IMR-90 (cell line): ENCODE measurements at regions of chr12 and their contacts with region 1.

Region 1: DNA sequence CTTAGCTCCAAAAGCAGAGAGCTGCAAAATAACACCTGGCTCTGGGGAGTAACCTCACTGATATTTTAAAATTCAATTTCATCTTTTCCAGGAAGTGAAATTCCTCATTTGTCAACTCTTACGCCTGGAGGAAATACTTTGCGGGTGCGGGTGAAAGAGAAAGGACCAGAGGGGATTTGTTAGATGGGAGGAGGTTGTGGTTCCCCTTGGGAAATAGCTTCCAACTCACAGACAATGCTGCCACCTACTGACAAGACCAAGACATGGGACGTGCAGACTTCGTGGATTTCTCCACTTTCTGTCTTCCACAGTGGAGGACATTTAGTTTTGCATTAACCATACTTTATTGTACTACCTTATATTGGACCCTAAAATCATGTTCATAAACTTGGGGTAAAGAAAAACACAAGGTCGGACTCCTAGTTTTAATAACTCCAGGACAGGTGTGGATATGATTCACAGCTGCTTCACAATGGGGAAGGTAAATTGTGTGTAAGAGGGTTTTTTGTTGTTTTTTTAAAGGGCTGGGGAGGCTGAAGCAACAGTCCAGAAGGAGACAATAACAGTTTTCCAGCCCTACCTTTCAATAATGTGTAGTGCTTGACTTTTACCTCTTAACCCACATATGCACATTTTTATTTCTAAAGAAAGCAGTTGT is 10.8 kb downstream of the FBXL14 start:
- DNase-seq: peak; percentile 93
- ATAC-seq: peak; percentile 63
- H3K4me3 ChIP-seq: no peak overlapping the region
- H3K27ac ChIP-seq: no peak overlapping the region
- H3K4me1 ChIP-seq: peaks cover 16% of the 10 kb centered on the region
- H3K27me3 ChIP-seq: no peaks in the 10 kb centered on the region
- CTCF ChIP-seq: peak; percentile 95
- POLR2A ChIP-seq: peak; percentile 27; the same call in 1 of the 2 replicates
- RAD21 ChIP-seq: peak; percentile 97

Region 2: GRCh38 chr12:575948-576612 is 1007.5 kb before region 1 on chr12:
- CTCF ChIA-PET with region 1: no interaction called
- POLR2A ChIA-PET with region 1: no interaction called
- dilution Hi-C with region 1: no loop called
- in situ Hi-C with region 1: loop called (anchors 10 kb)
- intact Hi-C with region 1: loop called (anchors 5 kb)
- DNase-seq: peak; percentile 31
- ATAC-seq: peak; percentile 86
- H3K4me3 ChIP-seq: no peak overlapping the region; the same call in 1 of the 2 replicates
- H3K27ac ChIP-seq: no peak overlapping the region
- H3K4me1 ChIP-seq: peaks cover 12% of the 10 kb centered on the region
- H3K27me3 ChIP-seq: peaks cover 11% of the 10 kb centered on the region
- CTCF ChIP-seq: peak; percentile 92
- POLR2A ChIP-seq: no peak
- RAD21 ChIP-seq: peak; percentile 88

Region 3: GRCh38 chr12:949453-950191 is 633.9 kb before region 1 on chr12 and contains the start of gene RAD52:
- CTCF ChIA-PET with region 1: no interaction called
- POLR2A ChIA-PET with region 1: no interaction called
- dilution Hi-C with region 1: no loop called
- in situ Hi-C with region 1: no loop called
- intact Hi-C with region 1: loop called (anchors 2 kb)
- DNase-seq: peak; percentile 99
- ATAC-seq: peak; percentile 89
- H3K4me3 ChIP-seq: peak within 1 kb of the TSS; percentile 72
- H3K27ac ChIP-seq: peak within 1 kb of the TSS; percentile 86
- H3K4me1 ChIP-seq: peaks cover 4% of the 10 kb centered on the region
- H3K27me3 ChIP-seq: no peaks in the 10 kb centered on the region
- CTCF ChIP-seq: peak; percentile 97
- POLR2A ChIP-seq: peak; percentile 78; the same call in 1 of the 2 replicates
- RAD21 ChIP-seq: peak; percentile 83
- total RNA-seq, gene RAD52: 9.7 and 11.3 TPM in 2 replicates

Region 4: GRCh38 chr12:1117970-1118563 is 465.5 kb before region 1 on chr12:
- CTCF ChIA-PET with region 1: interaction called, 36 read pairs
- POLR2A ChIA-PET with region 1: no interaction called
- dilution Hi-C with region 1: no loop called
- in situ Hi-C with region 1: loop called (anchors 5 kb)
- intact Hi-C with region 1: loop called (anchors 1 kb)
- DNase-seq: peak; percentile 79
- ATAC-seq: peak; percentile 78
- H3K4me3 ChIP-seq: no peak overlapping the region
- H3K27ac ChIP-seq: no peak overlapping the region
- H3K4me1 ChIP-seq: peaks cover 3% of the 10 kb centered on the region
- H3K27me3 ChIP-seq: no peaks in the 10 kb centered on the region
- CTCF ChIP-seq: peak; percentile 90
- POLR2A ChIP-seq: no peak
- RAD21 ChIP-seq: peak; percentile 94

Region 5: DNA sequence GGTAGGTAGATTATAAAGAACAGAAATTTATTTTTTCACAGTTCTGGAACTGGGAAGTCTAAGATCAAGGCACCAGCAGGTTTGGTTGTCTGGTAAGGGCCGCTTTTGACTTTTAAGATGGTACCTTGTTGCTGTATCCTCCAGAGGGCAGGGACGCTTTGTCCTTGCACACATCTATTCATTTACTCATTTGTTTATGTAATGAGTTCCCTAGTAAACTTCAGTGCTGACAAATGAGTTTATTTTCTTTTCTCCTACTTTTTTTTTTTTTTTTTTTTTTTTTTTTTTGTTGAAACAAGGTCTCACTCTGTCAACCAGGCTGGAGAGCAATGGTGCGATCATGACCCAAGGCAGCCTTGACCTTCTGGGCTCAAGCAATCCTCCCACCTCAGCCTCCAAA is 184.9 kb before region 1 on chr12:
- CTCF ChIA-PET with region 1: no interaction called
- POLR2A ChIA-PET with region 1: no interaction called
- dilution Hi-C with region 1: no loop called
- in situ Hi-C with region 1: no loop called
- intact Hi-C with region 1: loop called (anchors 1 kb)
- DNase-seq: peak; percentile 67
- ATAC-seq: peak; percentile 57; the same call in 1 of the 2 replicates
- H3K4me3 ChIP-seq: no peak overlapping the region
- H3K27ac ChIP-seq: no peak overlapping the region
- H3K4me1 ChIP-seq: no peaks in the 10 kb centered on the region
- H3K27me3 ChIP-seq: no peaks in the 10 kb centered on the region
- CTCF ChIP-seq: peak; percentile 44
- POLR2A ChIP-seq: no peak
- RAD21 ChIP-seq: peak; percentile 65